Activated T-helper 1 cell treated with anti-CD3 and anti-CD28 coated beads, Interleukin-12 subunit alpha, Interleukin-12 subunit beta, Interleukin-2, Interleukin-4 antibody, amounts not matched to agents 30 ng/mL and 10 ng/mL and 1 ng/mL, durations not matched to agents 14 hours and 24 hours and 36 hours (primary cell): ENCODE measurements at regions of chr9 and their contacts with region 1.

Region 1: GRCh38 chr9:36400332-36401163 is 479 bp upstream of the RNF38 start:
- DNase-seq: peak; percentile 86
- H3K4me3 Mint-ChIP-seq: peak overlapping the region; percentile 89
- H3K27ac Mint-ChIP-seq: peak overlapping the region; percentile 97
- H3K4me1 Mint-ChIP-seq: peaks cover 47% of the 10 kb centered on the region
- H3K27me3 Mint-ChIP-seq: no peaks in the 10 kb centered on the region

Region 2: GRCh38 chr9:35945341-35946018 is 455.1 kb before region 1 on chr9:
- intact Hi-C with region 1: no loop called
- DNase-seq: peak; percentile 27
- H3K4me3 Mint-ChIP-seq: no peak overlapping the region
- H3K27ac Mint-ChIP-seq: no peak overlapping the region
- H3K4me1 Mint-ChIP-seq: peaks cover 11% of the 10 kb centered on the region
- H3K27me3 Mint-ChIP-seq: peaks cover 8% of the 10 kb centered on the region

Region 3: DNA sequence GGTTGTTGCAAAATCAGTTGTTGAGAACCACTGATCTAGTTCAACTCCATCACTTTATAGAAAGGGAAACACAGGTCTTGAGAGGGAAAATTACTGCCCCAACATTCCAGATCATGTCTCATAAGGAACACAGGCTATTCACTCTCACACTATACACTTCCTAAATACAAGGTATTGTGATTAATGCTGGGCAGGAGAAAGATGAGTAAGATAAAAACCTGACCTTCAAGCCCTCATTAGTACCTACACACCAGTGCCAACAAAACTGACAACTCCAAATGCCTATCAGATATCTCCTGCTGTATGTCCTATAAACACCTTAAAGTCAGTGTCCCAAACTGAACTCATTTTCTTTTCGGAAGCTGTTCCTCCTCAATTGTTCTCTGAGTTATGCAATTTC is 150.5 kb before region 1 on chr9:
- intact Hi-C with region 1: loop called (anchors 2 kb)
- DNase-seq: no peak
- H3K4me3 Mint-ChIP-seq: no peak overlapping the region
- H3K27ac Mint-ChIP-seq: no peak overlapping the region
- H3K4me1 Mint-ChIP-seq: peaks cover 20% of the 10 kb centered on the region
- H3K27me3 Mint-ChIP-seq: no peaks in the 10 kb centered on the region

Region 4: GRCh38 chr9:36258208-36258988 is 142.2 kb before region 1 on chr9 and contains the start of gene GNE:
- intact Hi-C with region 1: loop called (anchors 1 kb)
- DNase-seq: peak; percentile 98
- H3K4me3 Mint-ChIP-seq: peak within 1 kb of the TSS; percentile 96
- H3K27ac Mint-ChIP-seq: peak within 1 kb of the TSS; percentile 96
- H3K4me1 Mint-ChIP-seq: peaks cover 15% of the 10 kb centered on the region
- H3K27me3 Mint-ChIP-seq: no peaks in the 10 kb centered on the region
- total RNA-seq, gene GNE: 21.7 and 22.7 TPM in 2 replicates

Region 5: DNA sequence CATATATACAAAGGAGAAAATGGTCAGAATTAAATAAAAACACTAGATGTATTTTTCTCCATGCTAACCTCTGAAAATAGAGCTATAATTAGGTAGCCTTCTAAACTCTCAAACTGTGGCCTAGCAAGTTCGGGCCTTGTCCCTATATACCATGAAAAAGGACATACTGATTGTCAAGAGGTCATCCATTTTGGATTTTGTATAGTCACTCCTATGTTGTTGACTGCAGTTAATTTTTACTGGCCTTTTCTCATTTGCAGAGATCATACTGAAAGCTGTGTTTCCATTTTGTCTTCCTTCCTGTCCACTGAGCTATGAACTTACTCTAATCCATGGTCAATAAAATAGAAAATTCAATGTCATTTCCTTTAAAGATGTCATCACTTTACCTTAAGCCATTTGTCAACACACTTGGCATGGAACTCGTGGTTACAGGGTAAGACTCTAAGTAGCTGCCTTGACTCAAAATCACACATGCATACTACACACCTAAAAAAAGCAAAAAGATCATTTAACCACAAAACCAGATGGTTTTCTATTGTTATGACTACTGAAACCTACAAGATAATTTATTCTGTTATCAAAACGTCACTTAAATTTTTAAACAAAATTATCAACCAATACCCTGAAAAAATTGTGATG is 58.5 kb before region 1 on chr9:
- intact Hi-C with region 1: loop called (anchors 2 kb)
- DNase-seq: no peak
- H3K4me3 Mint-ChIP-seq: no peak overlapping the region
- H3K27ac Mint-ChIP-seq: peak overlapping the region; percentile 87
- H3K4me1 Mint-ChIP-seq: peaks cover 12% of the 10 kb centered on the region
- H3K27me3 Mint-ChIP-seq: no peaks in the 10 kb centered on the region

Region 6: GRCh38 chr9:36382484-36382883 is 18.1 kb before region 1 on chr9:
- intact Hi-C with region 1: loop called (anchors 2 kb)
- DNase-seq: no peak
- H3K4me3 Mint-ChIP-seq: no peak overlapping the region
- H3K27ac Mint-ChIP-seq: peak overlapping the region; percentile 65
- H3K4me1 Mint-ChIP-seq: peaks cover 39% of the 10 kb centered on the region
- H3K27me3 Mint-ChIP-seq: no peaks in the 10 kb centered on the region

Region 7: DNA sequence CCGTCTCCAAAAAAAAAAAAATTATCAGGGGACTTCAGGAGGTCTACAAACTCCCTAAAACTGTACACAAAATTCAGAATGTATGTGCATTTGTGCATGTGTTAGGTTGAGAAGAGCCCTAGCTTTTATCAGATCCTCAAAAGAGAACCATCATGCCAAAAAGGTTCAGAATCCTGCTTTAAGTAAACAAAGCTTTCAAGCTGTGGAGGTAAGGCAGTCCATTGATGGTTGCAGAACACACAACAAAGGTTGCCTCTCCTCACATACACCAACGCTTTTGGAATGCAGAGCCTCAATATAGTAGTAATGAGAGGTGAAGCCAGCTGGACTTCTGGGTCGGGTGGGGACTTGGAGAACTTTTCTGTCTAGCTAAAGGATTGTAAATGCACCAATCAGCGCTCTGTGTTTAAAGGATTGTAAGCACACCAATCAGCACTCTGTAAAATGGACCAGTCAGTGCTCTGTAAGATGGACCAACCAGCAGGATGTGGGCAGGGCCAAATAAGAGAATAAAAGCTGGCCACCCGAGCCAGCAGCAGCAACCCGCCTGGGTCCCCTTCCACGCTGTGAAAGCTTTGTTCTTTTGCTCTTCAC is 57.4 kb after region 1 on chr9:
- intact Hi-C with region 1: loop called (anchors 1 kb)
- DNase-seq: no peak
- H3K4me3 Mint-ChIP-seq: peak overlapping the region; percentile 48
- H3K27ac Mint-ChIP-seq: peak overlapping the region; percentile 69
- H3K4me1 Mint-ChIP-seq: peaks cover 51% of the 10 kb centered on the region
- H3K27me3 Mint-ChIP-seq: no peaks in the 10 kb centered on the region

Region 8: DNA sequence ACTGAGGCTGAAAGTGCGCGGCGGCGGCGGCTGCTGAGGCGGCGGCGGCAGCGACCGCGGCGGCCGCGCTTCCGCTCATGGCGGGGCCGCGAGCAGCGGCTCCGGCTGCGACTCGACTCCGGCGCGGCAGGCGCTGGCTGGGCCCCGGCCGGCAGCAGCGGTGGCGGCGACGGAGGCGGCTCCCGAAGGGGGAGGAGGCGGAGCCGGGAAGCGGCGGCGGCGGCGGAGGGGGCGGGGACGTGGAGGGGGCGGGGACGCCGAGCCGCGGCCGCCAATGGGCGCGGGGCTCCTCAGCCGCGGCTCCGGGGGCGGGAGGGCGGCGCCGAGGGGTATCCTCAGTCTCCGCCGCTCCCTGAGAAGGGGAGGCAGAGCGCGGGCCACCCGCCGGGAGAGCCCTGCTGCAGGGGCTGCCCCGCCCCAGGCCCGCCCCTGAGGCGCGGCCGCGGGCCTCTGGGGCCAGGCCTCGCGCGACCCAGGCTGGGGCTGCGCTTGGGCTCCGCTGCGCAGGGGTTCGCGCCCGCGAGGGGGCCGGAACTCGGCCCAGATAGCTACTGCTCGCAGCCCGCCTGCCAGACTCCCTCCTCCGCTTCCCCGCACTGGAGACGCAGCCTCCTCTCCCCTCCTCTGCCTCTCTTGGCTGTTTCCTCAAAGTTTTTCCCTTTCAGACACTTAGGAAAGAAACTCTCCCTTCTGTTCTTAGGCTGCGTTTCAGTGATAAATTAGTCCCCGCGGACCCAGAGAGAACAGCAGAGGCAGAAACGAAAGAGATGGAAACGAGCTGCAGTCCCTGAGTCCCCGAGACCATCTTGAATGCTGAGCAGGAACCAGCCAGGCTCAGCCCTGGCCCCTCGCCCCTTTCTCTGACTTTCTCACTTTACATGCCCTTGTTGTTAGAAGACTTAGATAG is 87.2 kb after region 1 on chr9:
- intact Hi-C with region 1: loop called (anchors 1 kb)
- DNase-seq: peak; percentile 91
- H3K4me3 Mint-ChIP-seq: peak overlapping the region; percentile 87
- H3K27ac Mint-ChIP-seq: peak overlapping the region; percentile 87
- H3K4me1 Mint-ChIP-seq: peaks cover 53% of the 10 kb centered on the region
- H3K27me3 Mint-ChIP-seq: no peaks in the 10 kb centered on the region